Endothelial cell of umbilical vein (primary cell): ENCODE measurements at regions of chr1 and their contacts with region 1.

Region 1: GRCh38 chr1:86380257-86380861 is 15.8 kb downstream of the ODF2L start:
- DNase-seq: peak; percentile 82
- H3K4me3 ChIP-seq: no peak overlapping the region
- H3K27ac ChIP-seq: no peak overlapping the region
- H3K4me1 ChIP-seq: peaks cover 14% of the 10 kb centered on the region
- H3K27me3 ChIP-seq: no peaks in the 10 kb centered on the region
- CTCF ChIP-seq: peak; percentile 34 to 43
- POLR2A ChIP-seq: no peak

Region 2: GRCh38 chr1:86183810-86184209 is 196.5 kb before region 1 on chr1:
- CTCF ChIA-PET with region 1: no interaction called
- POLR2A ChIA-PET with region 1: no interaction called
- dilution Hi-C with region 1: no loop called
- intact Hi-C with region 1: no loop called
- DNase-seq: peak; percentile 22
- H3K4me3 ChIP-seq: no peak overlapping the region
- H3K27ac ChIP-seq: no peak overlapping the region
- H3K4me1 ChIP-seq: no peaks in the 10 kb centered on the region
- H3K27me3 ChIP-seq: peaks cover 1 to 10% of the 10 kb centered on the region in 2 experiments
- CTCF ChIP-seq: no peak
- POLR2A ChIP-seq: no peak

Region 3: GRCh38 chr1:86345042-86345441 is 35.3 kb before region 1 on chr1:
- CTCF ChIA-PET with region 1: no interaction called
- POLR2A ChIA-PET with region 1: no interaction called
- dilution Hi-C with region 1: no loop called
- intact Hi-C with region 1: no loop called
- DNase-seq: peak; percentile 26
- H3K4me3 ChIP-seq: no peak overlapping the region
- H3K27ac ChIP-seq: no peak overlapping the region
- H3K4me1 ChIP-seq: peaks cover 35% of the 10 kb centered on the region
- H3K27me3 ChIP-seq: no peaks in the 10 kb centered on the region
- CTCF ChIP-seq: no peak
- POLR2A ChIP-seq: no peak

Region 4: DNA sequence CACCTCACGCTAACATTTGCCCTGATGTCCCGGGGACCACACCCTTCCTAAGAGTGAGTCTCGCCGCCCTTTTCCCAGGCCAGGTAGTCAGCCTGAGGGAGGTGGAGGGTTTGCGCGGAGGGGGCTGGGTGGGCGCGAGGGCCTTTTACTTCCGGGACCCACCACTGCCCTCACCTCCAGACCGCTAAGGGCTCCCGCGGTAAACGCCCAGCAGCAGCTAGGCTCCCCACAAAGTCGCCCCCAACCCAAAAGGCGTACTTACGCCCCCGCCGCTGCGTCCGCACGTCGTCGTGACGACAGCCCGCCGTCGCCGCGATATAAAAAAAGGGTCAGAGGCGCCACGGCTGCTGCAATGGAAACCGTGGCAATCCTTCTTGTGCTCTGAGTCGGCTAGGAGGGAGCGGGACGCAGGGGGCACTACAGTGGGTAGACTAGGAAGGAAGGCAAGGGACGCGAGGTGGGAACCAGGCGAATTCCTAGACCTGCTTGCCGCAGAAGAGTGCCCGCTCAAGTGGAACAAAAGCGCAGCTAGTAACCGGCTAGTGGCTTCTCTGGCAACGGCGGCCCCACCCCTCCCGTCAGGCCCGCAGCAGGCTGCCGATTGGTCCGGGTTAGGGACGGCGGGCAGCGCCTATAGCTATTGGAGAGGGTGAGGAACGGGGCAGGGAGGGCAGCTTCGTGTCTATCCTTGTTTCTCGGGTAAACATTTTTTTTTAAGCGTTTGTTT is 15.6 kb after region 1 on chr1 and contains the start of gene ODF2L:
- CTCF ChIA-PET with region 1: interaction called, 10 read pairs
- POLR2A ChIA-PET with region 1: interaction called, 3 read pairs
- dilution Hi-C with region 1: no loop called
- intact Hi-C with region 1: loop called (anchors 1 kb)
- DNase-seq: peak; percentile 90
- H3K4me3 ChIP-seq: peak within 1 kb of the TSS; percentile 85 to 96 (median 85)
- H3K27ac ChIP-seq: peak within 1 kb of the TSS; percentile 72
- H3K4me1 ChIP-seq: peaks cover 28% of the 10 kb centered on the region
- H3K27me3 ChIP-seq: peaks cover 0 to 2% of the 10 kb centered on the region in 2 experiments
- CTCF ChIP-seq: no peak
- POLR2A ChIP-seq: peak; percentile 57
- total RNA-seq, gene ODF2L: 74.7 and 86.3 TPM in 2 replicates

Region 5: DNA sequence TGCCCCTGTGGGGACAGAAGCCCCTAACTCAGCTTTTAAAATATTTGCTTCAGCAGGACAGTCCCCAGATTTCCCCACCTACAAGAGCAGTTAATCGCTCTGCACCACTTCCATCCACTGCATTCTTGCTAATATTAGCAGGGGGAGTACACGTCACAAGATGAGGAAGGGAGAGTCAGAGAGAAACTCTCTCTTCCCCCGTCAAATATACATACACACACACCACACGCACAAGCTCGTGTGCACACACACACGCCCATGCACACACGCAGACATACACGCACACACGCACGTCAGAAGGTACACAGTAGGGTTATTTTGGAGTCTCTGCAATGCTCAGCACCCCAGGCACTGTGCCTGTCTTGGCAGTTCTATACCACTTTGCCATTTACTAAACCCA is 90.5 kb after region 1 on chr1:
- CTCF ChIA-PET with region 1: interaction called, 18 read pairs
- POLR2A ChIA-PET with region 1: no interaction called
- dilution Hi-C with region 1: no loop called
- intact Hi-C with region 1: loop called (anchors 1 kb)
- DNase-seq: no peak
- H3K4me3 ChIP-seq: no peak overlapping the region
- H3K27ac ChIP-seq: no peak overlapping the region
- H3K4me1 ChIP-seq: peaks cover 3% of the 10 kb centered on the region
- H3K27me3 ChIP-seq: peaks cover 2 to 3% of the 10 kb centered on the region in 2 experiments
- CTCF ChIP-seq: no peak
- POLR2A ChIP-seq: no peak

Region 6: GRCh38 chr1:86499987-86500593 is 119.7 kb after region 1 on chr1:
- CTCF ChIA-PET with region 1: interaction called, 85 read pairs
- POLR2A ChIA-PET with region 1: no interaction called
- dilution Hi-C with region 1: no loop called
- intact Hi-C with region 1: loop called (anchors 1 kb)
- DNase-seq: peak; percentile 9
- H3K4me3 ChIP-seq: no peak overlapping the region
- H3K27ac ChIP-seq: no peak overlapping the region
- H3K4me1 ChIP-seq: no peaks in the 10 kb centered on the region
- H3K27me3 ChIP-seq: peaks cover 5 to 13% of the 10 kb centered on the region in 2 experiments
- CTCF ChIP-seq: peak; percentile 60 to 83
- POLR2A ChIP-seq: no peak

Region 7: DNA sequence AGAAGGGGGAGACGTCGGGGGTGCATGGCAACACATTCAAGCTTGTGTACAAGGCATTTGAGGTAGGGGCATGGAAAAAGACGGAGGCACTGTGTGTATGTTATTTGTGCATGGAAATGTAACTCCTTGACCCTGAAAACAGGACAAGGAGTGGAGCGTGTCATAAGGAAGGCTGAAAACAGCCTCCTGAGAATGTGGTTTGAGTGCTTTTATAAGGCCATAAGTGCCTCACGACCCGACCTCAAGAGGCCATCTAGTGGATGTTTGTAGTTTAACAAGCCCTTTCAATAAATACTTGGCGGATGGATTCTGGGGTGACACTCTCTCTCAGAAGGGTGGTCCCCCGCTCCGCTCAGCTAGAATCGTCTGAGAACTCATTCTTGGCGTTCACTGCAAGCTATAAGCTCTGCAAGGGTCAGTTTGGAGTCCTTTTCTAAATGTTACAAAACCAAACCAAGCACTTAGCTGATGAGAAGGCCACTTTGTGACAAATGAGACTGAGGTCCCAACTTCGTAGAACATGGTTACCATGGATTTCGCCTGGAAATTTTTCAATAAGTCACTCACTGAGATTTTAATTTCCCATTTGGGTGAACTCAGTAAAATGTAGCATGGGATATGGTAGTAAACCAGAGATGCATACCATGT is 127.7 kb after region 1 on chr1:
- CTCF ChIA-PET with region 1: interaction called, 85 read pairs
- POLR2A ChIA-PET with region 1: no interaction called
- dilution Hi-C with region 1: no loop called
- intact Hi-C with region 1: loop called (anchors 1 kb)
- DNase-seq: peak; percentile 28
- H3K4me3 ChIP-seq: no peak overlapping the region
- H3K27ac ChIP-seq: no peak overlapping the region
- H3K4me1 ChIP-seq: no peaks in the 10 kb centered on the region
- H3K27me3 ChIP-seq: peaks cover 0 to 3% of the 10 kb centered on the region in 2 experiments
- CTCF ChIP-seq: peak; percentile 16 to 38
- POLR2A ChIP-seq: no peak

Region 8: GRCh38 chr1:86542626-86543025 is 162.3 kb after region 1 on chr1:
- CTCF ChIA-PET with region 1: no interaction called
- POLR2A ChIA-PET with region 1: no interaction called
- dilution Hi-C with region 1: no loop called
- intact Hi-C with region 1: no loop called
- DNase-seq: peak; percentile 42
- H3K4me3 ChIP-seq: no peak overlapping the region
- H3K27ac ChIP-seq: no peak overlapping the region
- H3K4me1 ChIP-seq: no peaks in the 10 kb centered on the region
- H3K27me3 ChIP-seq: no peaks in the 10 kb centered on the region
- CTCF ChIP-seq: no peak
- POLR2A ChIP-seq: no peak

Region 9: GRCh38 chr1:86704458-86704971 is 324.2 kb after region 1 on chr1 and contains the start of gene SH3GLB1:
- CTCF ChIA-PET with region 1: interaction called, 10 read pairs
- POLR2A ChIA-PET with region 1: no interaction called
- dilution Hi-C with region 1: no loop called
- intact Hi-C with region 1: loop called (anchors 10 kb)
- DNase-seq: peak; percentile 91
- H3K4me3 ChIP-seq: peak within 1 kb of the TSS; percentile 88 to 96 (median 94)
- H3K27ac ChIP-seq: peak within 1 kb of the TSS; percentile 85
- H3K4me1 ChIP-seq: peaks cover 28% of the 10 kb centered on the region
- H3K27me3 ChIP-seq: no peaks in the 10 kb centered on the region
- CTCF ChIP-seq: peak; percentile 96
- POLR2A ChIP-seq: peak; percentile 78
- total RNA-seq, gene SH3GLB1: 140 and 148 TPM in 2 replicates